Activated naive CD4-positive, alpha-beta T cell treated with anti-CD3 and anti-CD28 coated beads for 36 hours (primary cell): ENCODE measurements at regions of chr6 and their contacts with region 1.

Region 1: DNA sequence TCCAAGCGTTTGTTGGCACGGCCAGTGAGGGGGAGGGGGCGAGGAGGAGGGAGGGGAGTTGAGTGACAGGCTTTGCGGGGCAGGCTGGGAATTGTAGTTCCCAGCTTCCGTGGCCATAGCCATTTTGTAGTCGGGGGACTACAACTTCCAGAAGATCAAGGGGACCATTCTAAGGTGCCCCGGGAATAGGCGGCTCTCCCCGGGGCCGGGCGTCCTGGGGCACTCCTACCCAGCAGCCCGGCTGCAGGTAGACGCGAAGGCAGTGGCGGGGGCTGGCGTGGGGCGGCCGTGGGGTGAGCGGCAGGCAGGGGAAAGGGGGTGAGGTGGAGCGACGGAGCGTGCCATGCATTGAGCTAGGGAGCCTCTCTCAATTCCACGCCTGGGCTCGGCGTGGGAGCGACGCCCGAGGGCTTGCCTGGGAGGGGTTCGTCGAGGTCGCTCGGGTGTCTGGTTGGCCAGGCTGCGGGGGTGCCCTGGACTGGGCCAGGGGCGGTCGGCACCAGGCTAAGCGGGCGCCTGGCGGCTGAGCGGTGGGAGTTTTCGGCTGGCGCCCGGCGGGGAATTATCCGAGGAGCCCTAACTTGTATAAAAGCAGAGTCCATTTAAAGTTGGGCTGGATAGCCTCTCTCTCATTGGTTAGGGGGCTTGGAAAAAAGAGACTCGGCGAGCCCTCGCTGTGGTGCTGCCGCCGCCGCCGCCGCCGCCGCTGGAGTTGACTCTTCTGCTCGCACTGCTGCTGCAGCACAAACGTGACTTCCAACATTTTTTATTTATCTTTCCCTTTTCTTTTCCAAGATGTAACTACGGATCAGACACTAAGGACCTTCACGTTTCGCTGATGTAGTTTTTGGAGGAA is at the start of gene JARID2:
- DNase-seq: peak; percentile 98
- H3K4me3 Mint-ChIP-seq: peak within 1 kb of the TSS; percentile 100
- H3K27ac Mint-ChIP-seq: peak within 1 kb of the TSS; percentile 93
- H3K4me1 Mint-ChIP-seq: peaks cover 23% of the 10 kb centered on the region
- H3K27me3 Mint-ChIP-seq: no peaks in the 10 kb centered on the region
- total RNA-seq, gene JARID2: 26.6 to 27.7 TPM

Region 2: DNA sequence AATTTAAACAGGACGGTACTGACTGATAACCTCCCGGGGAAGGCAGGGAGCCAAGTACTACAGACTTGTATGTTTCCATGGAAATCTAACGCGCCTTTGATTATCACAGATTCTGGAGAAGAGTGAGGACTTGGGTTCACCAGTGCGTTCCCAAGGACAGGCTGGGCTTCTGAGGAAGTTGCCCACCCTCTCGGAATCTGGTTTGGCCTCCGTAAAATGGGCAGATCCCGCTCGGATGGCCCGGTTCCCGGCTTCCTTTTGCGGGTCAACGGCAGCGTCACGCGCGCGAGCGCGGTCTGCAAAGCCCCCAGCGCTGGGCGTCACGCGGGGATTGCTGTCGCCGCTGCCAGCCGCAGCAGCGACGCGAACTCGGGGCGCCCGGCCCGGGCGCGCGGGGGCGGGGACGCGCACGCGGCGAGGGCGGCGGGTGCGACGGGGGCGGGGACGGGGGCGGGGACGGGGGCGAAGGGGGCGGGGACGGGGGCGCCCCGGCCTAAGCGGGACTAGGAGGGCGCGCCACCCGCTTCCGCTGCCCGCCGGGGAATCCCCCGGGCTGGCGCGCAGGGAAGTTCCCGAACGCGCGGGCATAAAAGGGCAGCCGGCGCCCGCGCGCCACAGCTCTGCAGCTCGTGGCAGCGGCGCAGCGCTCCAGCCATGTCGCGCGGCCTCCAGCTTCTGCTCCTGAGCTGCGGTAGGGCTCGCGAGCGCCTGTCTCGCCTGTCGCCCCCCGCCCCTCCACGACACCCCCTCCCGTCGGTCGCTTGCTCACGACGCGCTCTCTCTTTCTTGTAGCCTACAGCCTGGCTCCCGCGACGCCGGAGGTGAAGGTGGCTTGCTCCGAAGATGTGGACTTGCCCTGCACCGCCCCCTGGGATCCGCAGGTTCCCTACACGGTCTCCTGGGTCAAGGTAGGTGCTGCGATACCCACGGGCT is 1128.2 kb before region 1 on chr6 and contains the start of gene CD83:
- CTCF ChIA-PET with region 1: no interaction called
- intact Hi-C with region 1: loop called (anchors 5 kb)
- DNase-seq: peak; percentile 75
- H3K4me3 Mint-ChIP-seq: peak within 1 kb of the TSS; percentile 93
- H3K27ac Mint-ChIP-seq: peak within 1 kb of the TSS; percentile 87
- H3K4me1 Mint-ChIP-seq: peaks cover 36% of the 10 kb centered on the region
- H3K27me3 Mint-ChIP-seq: peaks cover 2% of the 10 kb centered on the region
- total RNA-seq, gene CD83: 11.9 to 13.8 TPM

Region 3: DNA sequence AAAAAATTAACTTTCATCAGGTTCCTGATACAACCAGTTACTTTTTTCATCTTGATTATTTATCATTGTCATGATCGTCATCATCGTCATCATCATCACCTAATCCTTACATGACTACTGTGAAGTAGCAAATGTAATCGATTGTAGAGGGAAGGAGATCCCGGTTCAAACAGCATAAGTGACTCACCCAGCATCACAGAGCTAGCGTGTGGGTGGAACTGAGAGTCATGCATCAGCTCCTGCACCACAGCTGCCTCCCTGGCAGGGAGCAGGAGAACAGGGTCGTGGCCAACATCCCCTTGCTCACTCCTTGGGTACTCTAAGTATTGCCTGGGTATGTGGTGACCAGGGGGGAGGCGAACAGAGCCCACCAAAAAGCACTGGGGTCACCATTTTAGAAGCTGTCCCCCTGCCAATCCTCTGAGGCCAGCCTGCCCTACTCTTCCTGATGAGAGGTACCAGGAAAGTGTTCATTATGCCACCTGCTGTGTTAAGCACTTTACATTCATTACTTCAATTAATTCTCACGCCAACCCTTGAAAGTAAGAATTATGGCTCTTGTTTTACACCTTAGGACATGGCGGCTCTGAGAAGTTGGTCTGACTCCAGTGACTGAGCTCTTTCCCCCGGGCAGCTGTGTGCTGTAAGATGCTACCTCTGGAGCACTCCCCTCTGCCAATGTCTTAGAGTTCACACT is 702.8 kb before region 1 on chr6:
- CTCF ChIA-PET with region 1: no interaction called
- intact Hi-C with region 1: loop called (anchors 2 kb)
- DNase-seq: peak; percentile 92
- H3K4me3 Mint-ChIP-seq: no peak overlapping the region
- H3K27ac Mint-ChIP-seq: peak overlapping the region; percentile 64
- H3K4me1 Mint-ChIP-seq: peaks cover 24% of the 10 kb centered on the region
- H3K27me3 Mint-ChIP-seq: no peaks in the 10 kb centered on the region

Region 4: GRCh38 chr6:14857501-14857900 is 388.1 kb before region 1 on chr6:
- CTCF ChIA-PET with region 1: no interaction called
- intact Hi-C with region 1: loop called (anchors 5 kb)
- DNase-seq: peak; percentile 79
- H3K4me3 Mint-ChIP-seq: peak overlapping the region; percentile 36
- H3K27ac Mint-ChIP-seq: peak overlapping the region; percentile 91
- H3K4me1 Mint-ChIP-seq: peaks cover 28% of the 10 kb centered on the region
- H3K27me3 Mint-ChIP-seq: no peaks in the 10 kb centered on the region

Region 5: GRCh38 chr6:15171026-15171425 is 74.6 kb before region 1 on chr6:
- CTCF ChIA-PET with region 1: no interaction called
- intact Hi-C with region 1: no loop called
- DNase-seq: no peak
- H3K4me3 Mint-ChIP-seq: no peak overlapping the region
- H3K27ac Mint-ChIP-seq: no peak overlapping the region
- H3K4me1 Mint-ChIP-seq: no peaks in the 10 kb centered on the region
- H3K27me3 Mint-ChIP-seq: no peaks in the 10 kb centered on the region

Region 6: GRCh38 chr6:15227827-15228318 is 17.7 kb before region 1 on chr6:
- CTCF ChIA-PET with region 1: no interaction called
- intact Hi-C with region 1: no loop called
- DNase-seq: no peak
- H3K4me3 Mint-ChIP-seq: no peak overlapping the region
- H3K27ac Mint-ChIP-seq: no peak overlapping the region
- H3K4me1 Mint-ChIP-seq: no peaks in the 10 kb centered on the region
- H3K27me3 Mint-ChIP-seq: no peaks in the 10 kb centered on the region

Region 7: GRCh38 chr6:15327271-15327670 is 81.7 kb after region 1 on chr6:
- CTCF ChIA-PET with region 1: interaction called, 3 read pairs
- intact Hi-C with region 1: loop called (anchors 1 kb)
- DNase-seq: peak; percentile 79
- H3K4me3 Mint-ChIP-seq: no peak overlapping the region
- H3K27ac Mint-ChIP-seq: peak overlapping the region; percentile 85
- H3K4me1 Mint-ChIP-seq: peaks cover 88% of the 10 kb centered on the region
- H3K27me3 Mint-ChIP-seq: no peaks in the 10 kb centered on the region

Region 8: GRCh38 chr6:15621203-15622044 is 375.8 kb after region 1 on chr6:
- CTCF ChIA-PET with region 1: no interaction called
- intact Hi-C with region 1: loop called (anchors 2 kb)
- DNase-seq: no peak
- H3K4me3 Mint-ChIP-seq: no peak overlapping the region
- H3K27ac Mint-ChIP-seq: no peak overlapping the region
- H3K4me1 Mint-ChIP-seq: peaks cover 24% of the 10 kb centered on the region
- H3K27me3 Mint-ChIP-seq: no peaks in the 10 kb centered on the region